ENCODE measurements at regions of chr10 and their contacts with region 1.

Region 1: DNA sequence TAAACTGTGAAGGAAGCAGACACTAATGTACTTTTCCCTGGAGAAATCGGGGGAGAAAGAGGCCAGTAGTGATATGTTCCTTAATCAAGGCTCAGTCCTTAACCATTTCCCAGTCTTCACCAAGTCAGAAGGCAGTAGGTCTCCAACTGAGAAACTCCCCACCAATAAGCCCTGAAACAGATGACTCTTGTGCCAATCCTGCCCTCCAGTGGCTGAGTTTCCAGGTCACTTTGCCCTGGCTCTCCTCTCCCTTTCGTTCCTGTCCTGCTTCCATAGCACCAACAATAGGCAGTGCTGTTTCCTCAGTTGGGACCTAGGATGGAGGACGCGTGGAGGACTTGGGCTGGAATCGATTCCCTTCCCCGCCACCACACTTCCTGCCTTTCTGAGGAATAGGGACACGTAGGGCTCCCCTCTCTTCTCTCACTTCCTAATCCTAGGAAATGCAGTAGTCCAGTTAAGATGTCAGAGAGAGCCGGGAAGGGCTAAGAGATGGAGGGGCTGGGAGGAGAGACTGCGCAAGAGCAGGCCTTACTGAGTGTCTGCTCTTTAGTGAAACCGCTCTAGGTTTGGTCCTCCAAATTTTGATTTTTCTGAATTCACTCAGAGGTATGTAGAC is 23.4 kb downstream of the ATOH7 start:
- DNase-seq: peak; percentile 82
- ATAC-seq: peak; percentile 98
- H3K4me3 Mint-ChIP-seq: no peak overlapping the region
- H3K27ac Mint-ChIP-seq: no peak overlapping the region
- H3K4me1 Mint-ChIP-seq: peaks cover 6% of the 10 kb centered on the region; the same call in 1 of the 2 replicates
- H3K27me3 Mint-ChIP-seq: no peaks in the 10 kb centered on the region; the same call in 1 of the 2 replicates
- CTCF ChIP-seq: no peak

Region 2: DNA sequence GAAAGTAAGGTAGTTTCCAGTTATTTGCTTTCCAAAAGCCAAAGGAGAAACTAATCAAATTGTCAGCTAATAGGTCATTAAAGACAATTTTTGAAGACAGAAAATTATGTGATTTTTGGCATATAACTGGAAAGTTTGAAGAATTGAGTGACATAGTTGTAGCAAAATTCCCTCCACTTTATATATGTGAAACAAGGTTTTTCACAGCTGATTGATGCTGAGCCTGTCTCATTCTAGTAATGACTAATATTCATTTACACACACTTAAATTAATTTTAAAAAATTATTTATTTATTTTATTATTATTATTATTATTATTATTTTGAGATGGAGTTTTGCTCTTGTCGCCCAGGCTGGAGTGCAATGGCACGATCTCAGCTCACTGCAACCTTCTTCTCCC is 340.4 kb before region 1 on chr10:
- CTCF ChIA-PET with region 1: no interaction called
- POLR2A ChIA-PET with region 1: no interaction called
- DNase-seq: no peak
- ATAC-seq: no peak
- H3K4me3 Mint-ChIP-seq: no peak overlapping the region
- H3K27ac Mint-ChIP-seq: no peak overlapping the region
- H3K4me1 Mint-ChIP-seq: peaks cover 19% of the 10 kb centered on the region
- H3K27me3 Mint-ChIP-seq: no peaks in the 10 kb centered on the region
- CTCF ChIP-seq: no peak

Region 3: DNA sequence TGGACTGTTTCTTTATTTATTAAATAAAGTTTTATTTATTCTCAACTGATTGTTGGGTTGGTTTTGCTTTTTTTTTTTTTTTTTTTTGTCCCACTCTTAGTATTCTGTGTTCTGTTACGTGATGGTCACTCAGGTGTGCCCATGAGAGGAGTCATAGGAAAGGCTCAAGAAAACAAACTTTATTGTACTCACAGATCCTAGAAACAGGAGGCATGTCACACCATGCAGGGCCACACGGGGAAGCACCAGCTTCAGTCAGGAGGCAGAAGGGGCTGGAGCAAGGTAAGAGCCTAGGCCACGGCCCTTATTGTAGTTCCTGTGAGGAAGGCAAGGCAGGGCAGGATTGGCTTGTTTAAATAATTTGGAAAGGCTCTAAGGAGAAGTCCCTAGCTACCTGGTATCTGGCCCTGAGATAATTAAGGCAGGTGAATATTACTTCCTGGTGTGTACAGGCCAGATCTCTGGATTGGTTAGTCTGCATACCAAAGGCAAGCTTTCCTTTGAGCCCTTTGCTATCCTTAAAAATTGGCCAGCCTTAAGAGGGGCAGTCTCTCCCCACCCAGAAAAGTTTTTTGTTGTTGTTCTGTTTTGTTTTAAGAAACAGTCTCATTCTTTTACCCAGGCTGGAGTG is 15.1 kb after region 1 on chr10:
- CTCF ChIA-PET with region 1: interaction called, 16 read pairs
- POLR2A ChIA-PET with region 1: no interaction called
- DNase-seq: peak; percentile 58
- ATAC-seq: peak; percentile 100
- H3K4me3 Mint-ChIP-seq: no peak overlapping the region
- H3K27ac Mint-ChIP-seq: no peak overlapping the region
- H3K4me1 Mint-ChIP-seq: no peaks in the 10 kb centered on the region
- H3K27me3 Mint-ChIP-seq: peaks cover 10% of the 10 kb centered on the region
- CTCF ChIP-seq: no peak

Region 4: DNA sequence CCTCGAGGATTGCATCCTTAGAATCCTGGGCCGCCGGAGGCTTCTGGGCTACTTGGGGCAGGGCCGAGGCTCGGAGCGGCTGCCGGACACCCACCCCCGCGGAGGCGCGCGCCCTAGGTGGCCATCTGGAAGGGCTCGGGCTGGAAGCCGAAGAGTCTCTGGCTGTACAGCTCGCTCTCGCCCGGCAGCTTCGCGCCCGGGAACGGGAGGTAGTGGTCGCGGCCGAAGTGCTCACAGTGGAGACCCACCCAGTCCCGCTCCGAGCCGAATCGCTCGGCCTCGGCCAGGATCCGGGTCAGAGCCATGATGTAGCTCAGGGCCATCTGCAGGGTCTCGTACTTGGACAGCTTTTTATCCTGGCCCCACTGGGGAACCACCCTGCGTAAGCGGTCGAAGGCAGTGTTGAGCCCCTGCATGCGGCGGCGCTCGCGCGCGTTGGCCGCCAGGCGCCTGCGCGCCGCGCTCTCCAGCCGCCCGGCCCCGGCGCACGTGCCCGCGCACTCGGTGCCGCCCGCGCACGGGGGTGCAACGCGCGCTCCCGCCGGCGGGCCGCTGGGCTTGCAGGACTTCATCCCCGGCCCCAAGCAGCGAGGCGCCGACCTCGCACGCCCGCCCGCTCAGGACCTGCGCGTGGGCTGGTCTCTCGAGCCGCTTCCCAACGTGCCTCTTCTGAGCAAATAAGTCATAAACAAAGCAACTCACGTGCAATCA is 22.7 kb after region 1 on chr10:
- CTCF ChIA-PET with region 1: interaction called, 16 read pairs
- POLR2A ChIA-PET with region 1: no interaction called
- DNase-seq: peak; percentile 76
- ATAC-seq: peak; percentile 92
- H3K4me3 Mint-ChIP-seq: peak overlapping the region; percentile 77
- H3K27ac Mint-ChIP-seq: no peak overlapping the region; the same call in 1 of the 2 replicates
- H3K4me1 Mint-ChIP-seq: peaks cover 11% of the 10 kb centered on the region
- H3K27me3 Mint-ChIP-seq: peaks cover 66% of the 10 kb centered on the region
- CTCF ChIP-seq: no peak

Region 5: GRCh38 chr10:68251625-68252495 is 43.3 kb after region 1 on chr10:
- CTCF ChIA-PET with region 1: interaction called, 12 read pairs
- POLR2A ChIA-PET with region 1: no interaction called
- DNase-seq: no peak
- ATAC-seq: no peak
- H3K4me3 Mint-ChIP-seq: no peak overlapping the region
- H3K27ac Mint-ChIP-seq: no peak overlapping the region
- H3K4me1 Mint-ChIP-seq: peaks cover 18% of the 10 kb centered on the region
- H3K27me3 Mint-ChIP-seq: peaks cover 94% of the 10 kb centered on the region
- CTCF ChIP-seq: no peak

Region 6: DNA sequence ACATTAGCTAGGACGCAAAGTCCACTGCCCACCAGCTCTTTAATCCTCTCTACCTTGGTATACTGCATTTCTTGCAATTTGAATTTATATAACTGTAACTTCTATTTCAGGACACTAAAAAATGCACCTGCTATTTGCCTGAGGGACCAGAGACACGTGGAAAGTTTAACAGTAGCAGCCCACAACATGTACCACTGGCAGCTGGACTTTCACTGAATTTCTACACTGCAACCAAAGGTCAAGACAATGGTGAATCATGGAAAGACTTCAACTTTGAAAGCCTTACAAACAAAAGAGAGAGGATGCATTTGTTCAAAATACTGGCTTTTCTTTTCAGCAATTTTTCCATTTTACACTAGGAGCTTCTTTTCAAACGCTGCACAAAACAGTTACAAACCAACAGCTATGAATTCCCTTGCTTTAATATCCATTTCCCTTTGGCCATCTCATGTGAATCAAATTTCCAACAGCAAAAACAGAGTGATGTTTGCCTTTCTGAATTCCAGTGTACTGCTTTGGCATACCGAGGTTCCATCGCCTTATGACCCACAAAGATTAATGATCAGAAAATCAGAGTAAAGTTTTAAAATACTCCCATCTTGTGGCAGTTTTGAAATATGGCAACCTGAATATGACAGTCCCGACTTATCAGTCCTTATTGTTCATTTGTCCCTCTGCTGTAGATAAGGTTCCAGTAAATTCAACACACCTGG is 93.4 kb after region 1 on chr10:
- CTCF ChIA-PET with region 1: interaction called, 35 read pairs
- POLR2A ChIA-PET with region 1: no interaction called
- DNase-seq: no peak
- ATAC-seq: no peak; the same call in 1 of the 2 replicates
- H3K4me3 Mint-ChIP-seq: no peak overlapping the region
- H3K27ac Mint-ChIP-seq: no peak overlapping the region
- H3K4me1 Mint-ChIP-seq: peaks cover 9% of the 10 kb centered on the region
- H3K27me3 Mint-ChIP-seq: no peaks in the 10 kb centered on the region
- CTCF ChIP-seq: peak; percentile 16; the same call in 1 of the 2 replicates

Region 7: GRCh38 chr10:68331455-68332258 is 123.1 kb after region 1 on chr10 and contains the start of gene HNRNPH3:
- CTCF ChIA-PET with region 1: interaction called, 10 read pairs
- POLR2A ChIA-PET with region 1: interaction called, 15 read pairs
- DNase-seq: peak; percentile 99
- ATAC-seq: peak; percentile 89
- H3K4me3 Mint-ChIP-seq: peak within 1 kb of the TSS; percentile 99
- H3K27ac Mint-ChIP-seq: peak within 1 kb of the TSS; percentile 99
- H3K4me1 Mint-ChIP-seq: peaks cover 43% of the 10 kb centered on the region
- H3K27me3 Mint-ChIP-seq: no peaks in the 10 kb centered on the region; the same call in 1 of the 2 replicates
- CTCF ChIP-seq: no peak
- total RNA-seq, gene HNRNPH3: 220 to 226 TPM (median 223 TPM) in 3 replicates

Region 8: DNA sequence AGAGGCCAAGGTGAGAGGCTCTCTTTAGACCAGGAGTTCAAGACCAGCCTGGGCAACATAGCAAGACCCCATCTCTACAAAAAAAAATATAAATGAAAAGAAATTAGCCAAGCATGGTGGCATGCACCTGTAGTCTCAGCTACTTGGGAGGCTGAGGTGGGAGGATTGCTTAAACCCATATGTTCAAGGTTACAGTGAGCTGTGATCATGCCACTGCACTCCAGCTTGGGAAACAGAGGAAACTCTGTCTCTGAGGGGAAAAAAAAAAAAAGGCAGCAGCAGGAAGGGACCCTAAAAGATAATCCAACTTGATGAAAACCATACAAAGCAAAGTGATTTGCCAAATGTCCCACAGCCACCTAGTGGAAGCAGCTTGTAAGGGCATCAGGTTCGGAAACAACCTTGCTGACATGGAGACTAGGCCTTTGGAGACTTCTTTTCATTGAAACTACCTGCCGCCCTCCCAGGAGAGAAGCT is 139.8 kb after region 1 on chr10:
- CTCF ChIA-PET with region 1: interaction called, 19 read pairs
- POLR2A ChIA-PET with region 1: no interaction called
- DNase-seq: peak; percentile 57
- ATAC-seq: peak; percentile 89
- H3K4me3 Mint-ChIP-seq: no peak overlapping the region
- H3K27ac Mint-ChIP-seq: peak overlapping the region; percentile 95
- H3K4me1 Mint-ChIP-seq: no peaks in the 10 kb centered on the region
- H3K27me3 Mint-ChIP-seq: no peaks in the 10 kb centered on the region
- CTCF ChIP-seq: peak; percentile 88

Measured in WTC11 (cell line).